Esophagus squamous epithelium (tissue), 5 donors: ENCODE measurements at regions of chr1 and their contacts with region 1.

Region 1: GRCh38 chr1:110619412-110620249 is 13.5 kb upstream of the KCNA2 start:
- DNase-seq: peak; percentile 29
- H3K4me3 ChIP-seq: peak overlapping the region in 2 of 4 donors; percentile 28 to 49
- H3K27ac ChIP-seq: peak overlapping the region in 2 of 4 donors; percentile 18 to 41
- H3K4me1 ChIP-seq: peaks cover 0 to 16% (median 5%) of the 10 kb centered on the region in 3 donors
- H3K27me3 ChIP-seq: peaks cover 0 to 75% (median 1%) of the 10 kb centered on the region in 4 donors
- CTCF ChIP-seq: peak; percentile 92 to 97 (median 94)
- POLR2A ChIP-seq: no peak

Region 2: GRCh38 chr1:110524311-110525251 is 95.0 kb before region 1 on chr1:
- intact Hi-C with region 1: loop called (anchors 5 kb)
- DNase-seq: no peak
- H3K4me3 ChIP-seq: no peak overlapping the region
- H3K27ac ChIP-seq: no peak overlapping the region
- H3K4me1 ChIP-seq: peaks cover 0 to 10% (median 0%) of the 10 kb centered on the region in 3 donors
- H3K27me3 ChIP-seq: peaks cover 0 to 84% (median 0%) of the 10 kb centered on the region in 4 donors
- CTCF ChIP-seq: peak in 5 of 6 experiments; percentile 30 to 66 (median 49)
- POLR2A ChIP-seq: no peak

Region 3: DNA sequence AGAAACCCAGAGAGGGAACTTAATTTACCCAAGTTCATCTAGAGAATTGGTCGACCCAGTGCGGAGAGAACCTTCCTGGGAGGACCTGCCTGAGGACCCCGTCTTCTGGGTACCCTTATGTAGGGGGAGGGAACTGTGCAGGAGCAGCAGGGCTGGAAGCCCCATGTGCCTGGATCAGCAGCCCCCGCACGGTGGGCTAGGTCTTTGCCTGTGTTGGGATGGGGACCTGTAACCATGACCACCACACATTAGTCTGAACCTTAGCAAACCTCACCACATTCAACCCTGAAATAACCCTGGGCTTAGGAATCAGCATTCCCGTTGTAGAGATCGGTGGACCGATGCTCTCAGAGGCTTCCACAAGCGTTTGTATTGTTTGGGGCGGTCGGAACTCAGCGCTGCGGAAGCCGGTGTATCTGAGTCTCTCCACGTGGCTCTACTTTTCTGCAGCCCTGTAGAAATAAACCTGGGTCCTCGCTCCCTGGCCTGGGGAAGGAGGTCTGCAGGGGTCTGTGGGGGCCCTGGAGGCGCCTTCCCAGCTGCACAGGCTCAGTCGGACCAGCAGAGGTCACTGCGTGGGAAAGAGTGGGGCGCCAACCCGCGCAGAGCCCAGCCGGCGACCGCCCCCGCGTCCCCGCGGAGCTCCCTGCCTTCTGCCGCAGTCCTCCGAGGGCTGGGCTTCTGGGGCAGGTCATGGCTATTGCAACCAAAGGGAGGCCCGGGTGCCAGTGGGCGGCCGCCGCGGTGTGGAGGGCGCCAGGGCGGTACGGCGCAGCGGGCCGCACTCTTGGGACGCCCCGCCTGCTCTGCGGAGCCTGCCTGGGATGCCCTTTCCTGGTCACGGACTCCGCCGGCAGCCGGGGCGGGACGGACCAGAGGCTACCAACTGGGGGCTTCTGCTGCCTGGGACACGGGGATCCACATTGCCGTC is 64.5 kb before region 1 on chr1:
- intact Hi-C with region 1: loop called (anchors 5 kb)
- DNase-seq: no peak
- H3K4me3 ChIP-seq: peak overlapping the region; percentile 17 to 61 (median 33)
- H3K27ac ChIP-seq: peak overlapping the region in 1 of 4 donors; percentile 29
- H3K4me1 ChIP-seq: peaks cover 10 to 15% (median 10%) of the 10 kb centered on the region in 3 donors
- H3K27me3 ChIP-seq: peaks cover 0 to 78% (median 0%) of the 10 kb centered on the region in 4 donors
- CTCF ChIP-seq: peak; percentile 44 to 69 (median 58)
- POLR2A ChIP-seq: no peak

Region 4: GRCh38 chr1:110657351-110657750 is 37.7 kb after region 1 on chr1:
- intact Hi-C with region 1: no loop called
- DNase-seq: no peak
- H3K4me3 ChIP-seq: no peak overlapping the region
- H3K27ac ChIP-seq: no peak overlapping the region
- H3K4me1 ChIP-seq: no peaks in the 10 kb centered on the region
- H3K27me3 ChIP-seq: peaks cover 0 to 9% (median 0%) of the 10 kb centered on the region in 4 donors
- CTCF ChIP-seq: no peak
- POLR2A ChIP-seq: no peak

Region 5: DNA sequence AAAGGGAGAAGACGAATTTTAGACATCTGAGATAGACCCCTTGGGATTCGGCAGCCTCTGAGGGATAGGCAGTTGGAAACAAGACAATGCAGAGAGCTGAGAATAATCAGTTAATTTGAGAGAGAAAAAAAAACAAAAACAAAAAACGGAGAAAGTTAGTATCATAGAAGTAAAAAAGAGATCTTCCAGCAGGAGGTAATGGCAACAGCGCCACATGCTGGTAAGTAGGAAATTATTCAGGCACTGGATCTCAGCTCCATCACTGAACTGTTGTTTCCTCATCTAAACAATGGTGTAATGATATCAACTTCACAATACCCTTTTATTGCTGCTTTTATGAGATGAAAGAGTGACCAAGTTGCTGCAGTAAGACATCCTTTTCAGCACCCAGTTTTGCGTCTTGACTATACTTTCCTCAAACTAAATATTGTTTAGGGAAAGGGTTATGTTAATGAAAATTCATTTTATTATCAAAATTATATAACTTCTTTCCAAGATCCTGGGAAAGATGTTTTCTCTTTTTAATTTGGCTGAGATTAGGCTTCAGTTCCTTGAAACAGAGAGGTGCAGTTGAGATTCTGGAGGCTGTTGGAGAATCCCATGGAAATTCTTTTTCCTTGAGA is 146.5 kb after region 1 on chr1:
- intact Hi-C with region 1: loop called (anchors 5 kb)
- DNase-seq: no peak
- H3K4me3 ChIP-seq: no peak overlapping the region
- H3K27ac ChIP-seq: no peak overlapping the region
- H3K4me1 ChIP-seq: peaks cover 0 to 4% (median 0%) of the 10 kb centered on the region in 3 donors
- H3K27me3 ChIP-seq: peaks cover 0 to 58% (median 0%) of the 10 kb centered on the region in 4 donors
- CTCF ChIP-seq: peak; percentile 53 to 78 (median 74)
- POLR2A ChIP-seq: no peak

Region 6: DNA sequence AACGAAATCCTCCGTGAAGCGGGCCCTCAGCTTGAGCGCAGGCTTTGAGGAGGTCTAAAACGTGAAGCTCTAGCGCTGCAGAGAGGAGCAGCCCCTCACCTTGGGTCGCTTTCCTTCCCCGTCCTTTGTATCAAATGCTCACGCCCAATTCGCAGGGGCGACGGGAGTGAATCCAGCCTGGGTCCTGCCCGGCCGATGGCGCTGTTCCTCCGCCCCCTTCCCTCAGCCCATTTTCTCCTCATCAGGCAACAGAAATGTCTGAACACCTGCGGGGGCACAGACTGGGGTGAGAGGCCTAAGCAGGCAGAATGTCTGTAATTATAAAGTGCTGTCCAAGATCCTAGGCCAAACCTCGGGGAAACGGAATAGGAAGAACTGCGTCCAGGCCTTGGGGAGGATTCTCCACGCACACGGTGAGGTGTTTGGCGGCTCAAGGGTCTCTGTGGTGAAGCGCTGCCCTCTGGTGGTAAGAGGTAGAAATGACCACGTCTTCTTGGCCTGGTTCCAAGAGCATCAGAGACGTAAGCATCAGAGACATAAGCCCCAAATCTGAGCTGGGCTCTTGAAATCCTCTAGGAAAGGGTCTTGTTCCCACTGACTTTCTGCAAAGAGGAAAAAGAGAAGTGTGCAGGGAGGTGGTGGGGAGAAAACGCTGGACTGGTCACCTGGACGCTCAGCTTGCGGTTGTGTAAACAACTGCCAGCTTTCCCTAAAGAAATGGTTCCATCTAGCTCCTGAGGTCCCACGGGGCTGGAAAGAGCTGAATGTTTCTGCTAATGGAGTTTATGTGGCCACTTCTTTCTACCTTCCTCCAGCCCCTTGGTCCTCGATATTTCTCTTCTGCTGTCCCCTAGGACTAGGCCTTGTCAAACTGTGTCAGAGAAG is 161.2 kb after region 1 on chr1:
- intact Hi-C with region 1: loop called (anchors 5 kb)
- DNase-seq: peak; percentile 5
- H3K4me3 ChIP-seq: no peak overlapping the region
- H3K27ac ChIP-seq: no peak overlapping the region
- H3K4me1 ChIP-seq: peaks cover 0 to 8% (median 0%) of the 10 kb centered on the region in 3 donors
- H3K27me3 ChIP-seq: peaks cover 0 to 28% (median 0%) of the 10 kb centered on the region in 4 donors
- CTCF ChIP-seq: peak; percentile 70 to 84 (median 78)
- POLR2A ChIP-seq: no peak